Right ventricle myocardium inferior (tissue), 1 donor: ENCODE measurements at regions of chr4 and their contacts with region 1.

Region 1: GRCh38 chr4:153344131-153345010 is at the start of gene MND1:
- DNase-seq: peak; percentile 93
- ATAC-seq: peak; percentile 98
- total RNA-seq, gene MND1: 0.62 TPM

Region 2: GRCh38 chr4:153266988-153267387 is 77.4 kb before region 1 on chr4:
- intact Hi-C with region 1: no loop called
- DNase-seq: no peak
- ATAC-seq: no peak

Region 3: GRCh38 chr4:153432968-153433753 is 88.8 kb after region 1 on chr4:
- intact Hi-C with region 1: loop called (anchors 10 kb)
- DNase-seq: peak; percentile 70
- ATAC-seq: peak; percentile 83

Region 4: GRCh38 chr4:153466081-153466948 is 121.9 kb after region 1 on chr4 and contains the start of gene TMEM131L:
- intact Hi-C with region 1: loop called (anchors 5 kb)
- DNase-seq: peak; percentile 90
- ATAC-seq: peak; percentile 93
- total RNA-seq, gene TMEM131L: 14.4 TPM

Region 5: GRCh38 chr4:153643406-153644383 is 299.3 kb after region 1 on chr4:
- intact Hi-C with region 1: loop called (anchors 5 kb)
- DNase-seq: no peak
- ATAC-seq: no peak

Region 6: DNA sequence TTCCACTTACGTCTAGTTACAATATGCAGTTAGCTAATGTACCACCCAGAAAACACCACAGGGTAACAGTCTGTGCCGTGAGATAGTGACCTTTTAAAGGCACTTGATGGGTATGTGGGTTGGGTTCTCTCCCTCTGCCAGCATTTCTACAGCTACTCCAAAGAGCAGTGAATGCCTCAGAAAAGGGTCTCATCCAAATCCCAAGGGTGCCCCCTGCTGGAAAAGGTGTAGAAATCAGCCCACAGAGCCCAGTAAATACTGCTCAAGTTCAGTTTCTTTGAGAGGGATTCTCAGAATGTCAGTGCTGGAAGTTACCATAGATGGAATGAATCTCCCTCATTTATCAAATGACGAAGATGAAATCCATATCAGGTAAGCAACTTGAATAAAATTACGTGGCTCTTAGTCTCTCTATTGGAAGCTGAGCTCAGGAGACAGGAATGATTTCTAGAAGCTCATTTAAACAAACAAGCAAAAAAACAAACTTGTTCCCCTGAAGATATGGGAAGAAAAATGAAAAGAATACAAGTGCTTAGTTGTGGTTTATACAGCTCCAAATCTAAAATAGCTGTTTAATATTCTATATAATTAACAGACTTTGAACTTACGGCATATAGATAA is 405.9 kb after region 1 on chr4:
- intact Hi-C with region 1: loop called (anchors 5 kb)
- DNase-seq: no peak
- ATAC-seq: peak; percentile 57